ENCODE measurements at regions of chr17 and their contacts with region 1.

Region 1: DNA sequence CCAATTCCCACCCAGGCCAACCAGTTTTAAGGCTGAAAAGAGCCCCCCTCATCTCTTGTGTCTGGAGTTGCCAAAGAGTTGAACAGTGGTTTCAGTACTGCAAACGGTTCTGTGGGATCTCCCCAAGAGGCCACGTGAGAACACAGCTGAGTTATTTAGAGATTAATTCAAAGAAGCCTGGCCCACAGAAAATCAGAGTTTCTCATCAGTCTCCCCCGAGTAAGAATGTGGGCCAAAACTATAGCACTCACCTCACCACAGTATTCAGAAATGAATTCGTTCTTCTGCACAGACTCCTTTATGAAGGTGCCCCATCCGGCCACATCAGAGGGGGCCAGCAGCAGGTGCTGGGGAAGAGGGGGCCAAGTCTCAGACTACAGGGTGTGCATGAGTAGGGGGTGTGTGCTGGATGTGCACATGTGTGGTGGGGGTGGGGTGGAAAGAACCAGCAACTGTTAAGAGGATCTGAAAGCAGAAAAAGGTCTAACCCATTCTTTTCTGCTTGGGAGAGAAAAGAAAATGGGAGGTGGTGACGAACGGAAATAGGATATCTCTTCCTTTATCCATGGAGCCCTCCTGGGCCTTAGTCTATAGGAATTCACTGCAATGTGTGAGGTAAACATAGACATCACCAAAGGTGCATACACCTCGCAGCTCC is 22.6 kb downstream of the CNTNAP1 start:
- DNase-seq: no peak
- H3K4me3 ChIP-seq: no peak overlapping the region
- H3K27ac ChIP-seq: no peak overlapping the region
- H3K4me1 ChIP-seq: no peaks in the 10 kb centered on the region
- H3K27me3 ChIP-seq: no peaks in the 10 kb centered on the region
- CTCF ChIP-seq: no peak
- EP300 ChIP-seq: no peak
- POLR2A ChIP-seq: no peak

Region 2: DNA sequence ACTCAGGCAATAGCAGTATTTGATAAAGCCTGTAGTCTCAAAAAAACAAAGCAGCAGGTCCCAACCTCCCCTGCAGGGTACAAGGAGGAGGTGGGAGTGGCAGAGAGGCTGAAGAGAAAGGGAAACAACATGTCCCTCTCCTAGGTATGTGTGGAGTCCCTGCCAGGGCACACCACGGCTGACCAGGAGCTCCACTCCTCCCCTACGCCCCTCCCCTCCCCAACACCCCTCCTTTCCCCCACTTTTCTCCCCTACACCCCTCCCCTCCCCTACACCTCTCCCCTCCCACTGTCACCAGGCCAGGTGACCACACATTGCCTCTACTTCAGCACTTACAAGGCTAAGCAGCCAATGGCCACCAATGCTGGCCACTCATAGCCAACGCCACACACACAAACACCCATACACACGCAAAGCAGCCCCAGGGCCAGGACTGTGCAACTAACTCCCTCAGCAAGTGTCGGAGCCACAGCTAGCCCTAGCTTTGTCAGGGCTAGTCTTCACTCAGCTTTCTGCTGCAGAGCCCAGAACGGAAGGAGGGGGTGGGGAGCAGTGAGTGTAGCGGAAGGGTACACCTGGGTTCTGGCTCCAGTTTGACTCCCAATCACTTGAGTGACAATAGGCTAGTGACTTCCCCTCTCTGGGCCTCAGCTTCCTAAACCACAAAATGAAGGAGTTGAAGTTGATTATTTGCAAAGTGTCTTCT is 290.1 kb before region 1 on chr17:
- intact Hi-C with region 1: no loop called
- DNase-seq: peak in 1 of 2 donors; percentile 64
- H3K4me3 ChIP-seq: no peak overlapping the region
- H3K27ac ChIP-seq: peak overlapping the region in 4 of 5 donors; percentile 36 to 92 (median 54)
- H3K4me1 ChIP-seq: peaks cover 42 to 99% (median 71%) of the 10 kb centered on the region in 4 donors
- H3K27me3 ChIP-seq: no peaks in the 10 kb centered on the region
- CTCF ChIP-seq: no peak
- EP300 ChIP-seq: no peak
- POLR2A ChIP-seq: no peak

Region 3: DNA sequence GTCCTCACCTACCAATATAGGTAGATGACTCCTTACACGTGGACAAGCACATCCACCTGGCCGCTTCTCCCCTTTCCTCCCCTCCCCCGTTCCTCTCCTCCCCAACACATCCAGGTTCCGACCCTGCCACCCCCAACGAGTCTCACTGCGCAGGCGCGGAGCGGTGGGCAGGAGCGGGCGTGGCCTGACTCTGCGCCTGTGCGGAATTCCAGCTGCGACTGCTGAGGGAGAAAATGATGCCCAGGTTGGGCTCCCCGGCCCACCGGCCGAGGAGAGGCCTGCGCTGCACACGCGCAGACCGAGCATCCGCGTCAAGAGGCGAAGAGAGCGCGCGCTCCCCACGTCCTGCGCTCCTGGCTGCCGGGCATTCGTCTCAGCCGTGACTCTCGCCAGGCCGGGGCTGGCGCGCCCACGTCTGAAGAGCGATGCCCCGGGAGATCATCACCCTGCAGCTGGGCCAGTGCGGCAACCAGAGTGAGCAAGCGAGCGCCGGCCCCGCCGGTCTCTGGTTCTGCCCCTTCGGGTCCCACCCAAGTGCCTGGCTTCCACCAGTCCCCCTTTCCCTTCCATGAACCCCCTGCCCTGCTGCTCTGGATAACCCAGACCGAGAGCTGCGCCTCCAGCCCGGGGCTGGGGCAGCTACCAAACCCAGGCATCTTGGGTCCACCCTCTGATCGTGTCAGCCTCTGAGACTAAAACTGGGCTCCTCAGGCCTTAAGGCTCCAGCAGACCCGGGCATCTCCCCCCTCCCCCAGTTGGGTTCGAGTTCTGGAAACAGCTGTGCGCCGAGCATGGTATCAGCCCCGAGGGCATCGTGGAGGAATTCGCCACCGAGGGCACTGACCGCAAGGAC is 45.7 kb before region 1 on chr17 and contains the start of gene TUBG2:
- intact Hi-C with region 1: no loop called
- DNase-seq: peak; percentile 84 to 97
- H3K4me3 ChIP-seq: peak within 1 kb of the TSS; percentile 54 to 72 (median 58)
- H3K27ac ChIP-seq: peak within 1 kb of the TSS; percentile 45 to 87 (median 76)
- H3K4me1 ChIP-seq: peaks cover 11 to 33% (median 26%) of the 10 kb centered on the region in 4 donors
- H3K27me3 ChIP-seq: no peaks in the 10 kb centered on the region
- CTCF ChIP-seq: no peak
- EP300 ChIP-seq: no peak
- POLR2A ChIP-seq: no peak
- total RNA-seq, gene TUBG2: 4.3 to 181 (median 15.8) TPM

Region 4: GRCh38 chr17:42953669-42954068 is 248.7 kb after region 1 on chr17:
- intact Hi-C with region 1: loop called (anchors 10 kb)
- DNase-seq: peak; percentile 84 to 87
- H3K4me3 ChIP-seq: no peak overlapping the region
- H3K27ac ChIP-seq: peak overlapping the region in 3 of 5 donors; percentile 25 to 29 (median 28)
- H3K4me1 ChIP-seq: peaks cover 0 to 8% (median 6%) of the 10 kb centered on the region in 4 donors
- H3K27me3 ChIP-seq: no peaks in the 10 kb centered on the region
- CTCF ChIP-seq: no peak
- EP300 ChIP-seq: no peak
- POLR2A ChIP-seq: no peak